ENCODE measurements at regions of chr19 and their contacts with region 1.

Region 1: GRCh38 chr19:42028304-42029216 is 34.5 kb upstream of the ATP1A3 start:
- DNase-seq: peak; percentile 63
- ATAC-seq: peak; percentile 87
- H3K4me3 ChIP-seq: peak overlapping the region; percentile 61 to 67
- H3K27ac ChIP-seq: peak overlapping the region; percentile 30
- H3K4me1 ChIP-seq: peaks cover 0 to 10% of the 10 kb centered on the region in 2 experiments; a peak in 1 of 4 replicates
- H3K27me3 ChIP-seq: 0 out of 2 replicates have a peak, but pooled peaks cover 4% of the 10 kb centered on the region
- CTCF ChIP-seq: peak; percentile 78 to 99 (median 99)
- POLR2A ChIP-seq: no peak
- RAD21 ChIP-seq: peak; percentile 31; the same call in 1 of the 2 replicates

Region 2: DNA sequence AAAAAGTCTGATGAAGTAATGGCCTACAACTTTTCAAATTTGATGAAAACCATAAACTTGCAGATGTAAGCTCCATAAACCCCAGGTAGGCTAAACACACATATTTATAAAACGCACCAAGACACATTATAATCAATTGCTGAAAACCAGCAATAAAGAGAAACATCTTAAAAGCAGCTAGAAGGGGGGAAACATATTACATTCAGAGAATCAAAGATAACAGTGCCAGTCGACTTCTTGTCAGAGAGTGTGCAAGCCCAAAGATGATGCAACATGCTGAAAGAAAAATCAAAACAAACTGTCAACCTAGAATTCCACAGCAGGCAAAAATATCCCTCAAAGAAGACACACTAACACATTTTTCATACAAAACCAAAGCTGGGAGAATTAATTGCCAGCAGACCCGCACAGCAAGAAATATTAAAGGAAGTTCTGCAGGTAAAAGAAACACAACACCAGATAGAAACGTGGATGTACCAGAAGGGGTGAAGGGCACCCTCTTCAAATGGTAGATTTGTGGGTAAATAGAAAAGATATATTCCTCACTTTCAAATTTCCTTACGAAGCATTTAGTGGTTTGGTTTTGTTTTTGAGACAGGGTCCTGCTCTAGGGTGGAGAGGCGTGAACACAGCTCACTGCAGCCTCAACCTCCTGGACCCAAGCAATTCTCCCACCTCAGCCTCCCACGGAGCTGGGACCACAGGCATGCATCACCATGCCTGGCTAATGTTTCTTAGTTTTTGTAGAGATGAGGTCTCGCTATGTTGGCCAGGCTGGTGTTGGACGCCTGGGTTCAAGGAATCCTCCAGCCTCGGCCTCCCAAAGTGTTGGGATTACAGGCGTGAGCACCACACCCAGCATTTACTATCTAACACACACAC is 18.1 kb before region 1 on chr19:
- CTCF ChIA-PET with region 1: interaction called, 12 read pairs
- POLR2A ChIA-PET with region 1: interaction called, 6 read pairs
- RAD21 ChIA-PET with region 1: no interaction called
- intact Hi-C with region 1: no loop called
- DNase-seq: peak; percentile 23
- ATAC-seq: no peak
- H3K4me3 ChIP-seq: no peak overlapping the region
- H3K27ac ChIP-seq: no peak overlapping the region
- H3K4me1 ChIP-seq: no peaks in the 10 kb centered on the region
- H3K27me3 ChIP-seq: no peaks in the 10 kb centered on the region
- CTCF ChIP-seq: no peak
- POLR2A ChIP-seq: no peak
- RAD21 ChIP-seq: no peak

Region 3: DNA sequence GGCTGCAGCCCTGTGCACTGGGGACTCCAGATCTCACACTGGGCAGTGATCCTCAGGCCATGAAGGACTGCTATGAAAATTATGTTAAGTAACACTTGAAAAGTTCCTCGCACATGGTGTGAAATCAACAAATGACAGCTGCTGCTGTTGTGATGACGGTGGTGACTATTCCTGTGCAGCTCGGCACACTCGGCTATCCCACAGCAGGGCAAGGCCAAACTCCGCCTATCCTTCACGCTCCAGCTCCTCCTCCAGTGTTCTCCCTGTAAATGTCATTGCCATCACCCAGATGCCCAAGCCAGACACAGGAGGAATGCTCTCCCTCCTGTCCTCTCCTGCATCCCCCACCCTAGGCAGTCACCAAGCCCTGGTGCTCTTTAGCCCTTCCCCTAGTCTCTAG is 10.1 kb after region 1 on chr19:
- CTCF ChIA-PET with region 1: interaction called, 23 read pairs
- POLR2A ChIA-PET with region 1: no interaction called
- RAD21 ChIA-PET with region 1: no interaction called
- intact Hi-C with region 1: no loop called
- DNase-seq: no peak
- ATAC-seq: no peak
- H3K4me3 ChIP-seq: no peak overlapping the region
- H3K27ac ChIP-seq: no peak overlapping the region
- H3K4me1 ChIP-seq: peaks cover 6 to 14% of the 10 kb centered on the region in 2 experiments
- H3K27me3 ChIP-seq: no peaks in the 10 kb centered on the region
- CTCF ChIP-seq: no peak
- POLR2A ChIP-seq: no peak
- RAD21 ChIP-seq: no peak